Panc1 (cell line): ENCODE measurements at regions of chr3 and their contacts with region 1.

Region 1: DNA sequence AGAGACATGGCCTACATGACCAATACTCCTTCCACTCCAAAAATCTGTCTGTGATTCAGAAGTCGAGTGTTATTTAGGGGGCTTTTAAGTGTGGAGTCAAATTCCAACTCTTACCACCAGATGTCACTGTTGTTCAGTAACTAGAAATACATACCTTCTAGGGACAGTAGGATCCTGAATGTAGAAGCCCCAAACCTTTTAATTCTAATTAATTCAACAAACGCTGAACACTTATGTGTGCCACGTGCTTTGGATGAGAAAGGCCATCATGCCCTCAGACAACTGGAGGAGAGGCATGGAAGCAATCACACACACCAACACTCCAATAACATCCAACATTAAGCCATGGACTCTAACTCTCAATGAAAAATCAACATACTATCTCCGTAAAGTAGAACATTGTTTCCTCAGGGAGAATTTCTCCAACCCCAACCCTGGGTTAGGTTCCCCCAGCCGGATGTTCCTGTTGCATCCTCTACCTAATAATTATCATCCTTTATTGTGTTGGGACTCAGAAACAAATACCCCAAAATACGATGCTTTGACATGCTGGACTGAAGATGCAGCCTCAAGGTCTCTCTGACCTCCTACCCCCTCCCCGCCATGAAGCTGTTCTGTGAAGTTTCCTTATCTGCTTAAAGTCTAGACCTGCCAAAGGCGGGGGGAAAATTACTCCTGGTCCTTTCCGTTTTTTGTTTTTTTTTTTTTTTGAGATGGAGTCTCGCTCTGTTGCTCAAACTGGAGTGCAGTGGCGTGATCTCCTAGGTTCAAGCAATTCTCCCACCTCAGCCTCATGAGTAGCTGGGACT is 8.0 kb upstream of the CCDC13 start:
- DNase-seq: no peak
- ATAC-seq: peak; percentile 84
- H3K4me3 ChIP-seq: no peak overlapping the region
- H3K27ac ChIP-seq: no peak overlapping the region
- H3K4me1 ChIP-seq: no peaks in the 10 kb centered on the region
- H3K27me3 ChIP-seq: no peaks in the 10 kb centered on the region
- CTCF ChIP-seq: peak; percentile 69

Region 2: GRCh38 chr3:42839616-42840015 is 58.5 kb after region 1 on chr3:
- CTCF ChIA-PET with region 1: no interaction called
- POLR2A ChIA-PET with region 1: interaction called, 3 read pairs
- in situ Hi-C with region 1: no loop called
- intact Hi-C with region 1: loop called (anchors 2 kb)
- DNase-seq: peak; percentile 58
- ATAC-seq: peak; percentile 97
- H3K4me3 ChIP-seq: peak overlapping the region in 1 of 2 experiments; percentile 30; a peak in 2 of 4 replicates
- H3K27ac ChIP-seq: no peak overlapping the region
- H3K4me1 ChIP-seq: no peaks in the 10 kb centered on the region
- H3K27me3 ChIP-seq: no peaks in the 10 kb centered on the region
- CTCF ChIP-seq: peak; percentile 77

Region 3: DNA sequence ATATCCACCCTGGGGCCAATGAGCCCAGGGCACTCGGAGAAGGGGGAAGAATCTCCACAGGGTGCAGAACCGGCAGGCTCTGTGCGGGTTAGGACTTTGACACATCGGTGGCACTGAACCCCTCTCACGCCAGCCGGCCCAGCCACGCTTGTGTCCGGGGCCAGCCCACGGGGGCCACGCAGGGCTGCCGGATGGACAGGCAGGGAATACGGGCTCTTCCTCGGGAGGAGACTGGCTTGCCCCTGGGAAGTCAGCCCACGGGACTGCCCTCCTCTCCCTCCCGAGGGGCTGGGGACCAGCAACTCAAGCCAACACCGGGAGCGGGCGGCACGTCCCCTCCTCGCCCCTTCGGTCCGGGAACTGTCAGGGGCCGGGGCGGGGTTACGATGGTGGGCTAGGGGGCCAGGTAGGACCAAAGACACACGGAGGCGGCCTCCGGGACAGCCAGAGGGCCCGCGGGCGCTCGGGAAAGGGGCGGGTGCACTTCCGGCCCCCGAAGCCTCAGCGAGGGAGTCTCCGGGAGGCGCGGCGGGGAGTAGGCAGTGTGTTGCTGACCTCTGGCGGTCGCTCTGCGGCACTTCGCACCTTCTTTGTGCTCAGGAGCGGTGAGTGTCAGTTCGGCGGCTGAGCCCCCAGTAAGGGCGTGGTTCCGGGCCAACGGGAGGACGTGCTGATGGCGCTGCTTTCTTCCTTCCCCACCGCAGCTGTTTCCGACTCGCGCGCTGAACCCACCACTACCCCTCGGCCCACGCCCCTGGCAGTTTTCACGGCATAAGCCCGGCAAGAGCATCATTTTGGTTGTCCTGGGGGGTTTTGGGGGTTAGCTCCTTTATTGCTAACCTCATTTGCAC is 99.7 kb after region 1 on chr3:
- CTCF ChIA-PET with region 1: no interaction called
- POLR2A ChIA-PET with region 1: no interaction called
- in situ Hi-C with region 1: no loop called
- intact Hi-C with region 1: loop called (anchors 2 kb)
- DNase-seq: peak; percentile 24
- ATAC-seq: peak; percentile 98
- H3K4me3 ChIP-seq: peak overlapping the region; percentile 52 to 58
- H3K27ac ChIP-seq: peak overlapping the region; percentile 44; the same call in 1 of the 2 replicates
- H3K4me1 ChIP-seq: no peaks in the 10 kb centered on the region
- H3K27me3 ChIP-seq: no peaks in the 10 kb centered on the region
- CTCF ChIP-seq: peak; percentile 86